Gastrocnemius medialis (tissue), 4 donors: ENCODE measurements at regions of chr1 and their contacts with region 1.

Region 1: DNA sequence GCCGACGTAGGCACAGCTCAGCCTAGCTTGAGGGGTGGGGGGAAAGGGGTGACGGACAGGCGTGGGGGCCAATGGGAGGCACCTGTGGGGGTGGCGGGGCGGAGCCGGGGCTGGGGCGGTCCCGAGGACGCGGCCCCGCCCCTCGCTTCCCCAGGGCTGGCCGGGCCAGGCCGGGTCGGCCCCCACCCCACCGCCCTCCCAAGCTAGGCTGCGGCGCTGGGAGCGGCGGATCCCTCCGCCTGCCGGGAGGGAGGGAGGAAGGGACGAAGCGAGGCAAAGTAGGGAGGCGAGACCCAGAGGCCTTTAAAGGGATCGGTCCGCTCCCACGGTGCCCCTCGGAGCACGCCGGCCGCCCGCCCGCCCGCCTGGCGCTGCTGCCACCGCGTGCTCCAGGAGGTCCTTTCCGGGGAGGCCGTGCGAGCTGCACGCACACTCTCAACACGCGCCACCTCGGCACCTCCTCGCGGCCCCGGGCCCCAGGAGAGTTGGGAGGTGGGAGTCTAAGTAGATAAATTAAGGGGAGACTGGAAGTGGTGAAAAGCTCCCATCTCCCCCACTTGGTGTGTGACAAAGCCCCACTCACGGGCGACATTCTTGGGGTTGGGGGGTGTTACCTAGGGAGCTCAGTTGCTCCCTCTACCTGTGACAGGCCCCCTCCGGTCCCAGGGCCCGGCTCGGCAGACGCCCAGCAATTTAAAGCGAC is 373 bp upstream of the MEF2D start:
- DNase-seq: peak; percentile 94 to 96
- ATAC-seq: peak; percentile 35 to 37
- H3K4me3 ChIP-seq: peak overlapping the region; percentile 89 to 96 (median 93)
- H3K27ac ChIP-seq: peak overlapping the region; percentile 96 to 99 (median 98)
- H3K4me1 ChIP-seq: peaks cover 66 to 67% of the 10 kb centered on the region in 2 donors
- H3K27me3 ChIP-seq: no peaks in the 10 kb centered on the region
- CTCF ChIP-seq: peak in 4 of 5 experiments; percentile 54 to 67 (median 58)
- POLR2A ChIP-seq: no peak

Region 2: GRCh38 chr1:156123356-156124196 is 377.4 kb before region 1 on chr1:
- in situ Hi-C with region 1: loop called in 1 of 4 experiments (anchors 25 kb)
- intact Hi-C with region 1: loop called (anchors 5 kb)
- DNase-seq: peak; percentile 91 to 98
- ATAC-seq: peak; percentile 64 to 73
- H3K4me3 ChIP-seq: peak overlapping the region; percentile 47 to 59 (median 48)
- H3K27ac ChIP-seq: peak overlapping the region; percentile 98 to 99 (median 98)
- H3K4me1 ChIP-seq: peaks cover 98 to 99% of the 10 kb centered on the region in 2 donors
- H3K27me3 ChIP-seq: no peaks in the 10 kb centered on the region
- CTCF ChIP-seq: peak in 3 of 5 experiments; percentile 32 to 48 (median 47)
- POLR2A ChIP-seq: peak; percentile 86 to 88

Region 3: DNA sequence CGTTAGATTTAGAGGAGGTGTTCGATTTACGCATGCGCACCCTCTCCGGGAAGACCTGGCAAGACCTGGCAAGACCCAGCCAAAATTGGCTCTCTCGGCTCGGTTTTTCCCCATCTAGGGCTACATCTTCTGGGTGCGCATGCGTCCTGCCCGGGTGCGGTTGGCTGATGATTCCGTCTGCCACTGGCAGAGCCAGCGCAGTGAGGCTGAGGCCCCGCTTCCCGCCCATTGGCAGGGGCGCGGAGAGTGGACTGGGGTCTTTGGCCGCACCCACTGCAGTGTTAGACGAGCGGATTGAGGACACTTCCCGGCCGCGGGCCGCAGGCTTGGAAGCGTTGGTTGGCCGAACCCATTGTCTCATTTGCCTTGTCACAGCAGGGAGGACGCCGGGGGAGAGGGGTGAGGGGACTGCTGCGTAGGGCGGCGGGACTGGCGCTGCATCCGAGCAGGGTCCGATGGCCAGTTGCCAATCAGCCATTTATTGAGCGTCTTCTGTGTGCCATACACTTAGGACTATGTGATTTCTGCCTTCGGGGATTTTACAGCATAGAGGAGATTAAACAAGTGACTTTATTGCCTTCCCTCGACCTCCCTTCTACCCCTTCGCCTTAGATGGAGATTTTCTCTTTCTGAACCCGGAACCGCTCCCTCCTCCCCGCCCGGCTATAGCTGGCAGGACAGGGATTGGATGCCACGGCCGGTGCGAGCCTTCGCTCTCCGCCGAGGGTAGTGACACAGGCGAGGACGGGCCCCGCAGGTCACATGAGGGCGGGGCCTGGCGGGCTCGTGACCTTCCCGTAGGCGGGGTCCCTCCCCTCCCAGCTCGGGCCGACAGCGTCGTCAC is 44.1 kb before region 1 on chr1:
- in situ Hi-C with region 1: no loop called
- intact Hi-C with region 1: loop called (anchors 1 kb)
- DNase-seq: peak; percentile 99
- ATAC-seq: peak; percentile 84 to 85
- H3K4me3 ChIP-seq: peak overlapping the region; percentile 60 to 76 (median 73)
- H3K27ac ChIP-seq: peak overlapping the region; percentile 96 to 99 (median 98)
- H3K4me1 ChIP-seq: peaks cover 4 to 8% of the 10 kb centered on the region in 2 donors
- H3K27me3 ChIP-seq: no peaks in the 10 kb centered on the region
- CTCF ChIP-seq: peak in 1 of 5 experiments; percentile 16
- POLR2A ChIP-seq: peak; percentile 86 to 95

Region 4: DNA sequence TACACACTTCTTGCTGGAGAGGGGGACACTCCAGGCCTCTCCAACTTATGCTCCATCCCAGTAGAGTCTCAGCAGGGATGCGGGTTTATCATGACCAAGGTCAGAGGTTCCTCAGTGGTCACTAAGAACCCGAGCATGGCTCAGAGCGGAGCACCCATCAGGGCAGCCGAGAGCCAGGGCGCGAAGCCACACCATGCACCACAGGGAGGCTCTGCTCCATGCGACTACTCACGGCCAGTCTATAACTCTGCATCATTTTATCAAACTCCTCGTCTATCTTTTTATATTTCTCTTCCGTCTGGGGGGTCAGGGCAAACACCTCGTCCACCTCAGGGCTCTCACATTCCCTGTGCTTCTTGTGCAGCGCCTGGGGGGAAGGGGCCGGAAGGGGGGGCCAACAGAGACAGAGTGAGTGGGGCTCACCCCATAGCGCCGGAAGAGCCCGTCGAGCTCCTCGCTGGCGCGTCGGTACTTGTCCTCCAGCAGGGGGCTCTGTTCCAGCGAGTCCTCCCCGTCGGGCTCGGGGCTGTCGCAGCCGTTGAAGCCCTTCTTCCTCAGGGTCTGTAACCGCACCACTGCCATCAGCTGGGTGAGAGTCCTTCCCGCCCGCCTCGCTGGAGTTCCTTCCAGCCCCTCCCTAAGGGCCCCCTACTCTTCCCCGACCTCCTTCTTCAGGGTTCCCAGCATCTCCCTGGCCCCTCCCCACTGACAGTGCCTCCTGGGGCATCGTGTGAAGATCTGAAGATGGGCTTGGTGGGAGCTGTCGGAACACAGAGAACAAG is 20.3 kb before region 1 on chr1:
- in situ Hi-C with region 1: no loop called
- intact Hi-C with region 1: loop called (anchors 1 kb)
- DNase-seq: peak in 1 of 2 donors; percentile 61
- ATAC-seq: no peak
- H3K4me3 ChIP-seq: no peak overlapping the region
- H3K27ac ChIP-seq: peak overlapping the region; percentile 96 to 99 (median 98)
- H3K4me1 ChIP-seq: peaks cover 95 to 100% of the 10 kb centered on the region in 2 donors
- H3K27me3 ChIP-seq: no peaks in the 10 kb centered on the region
- CTCF ChIP-seq: peak; percentile 56 to 79 (median 72)
- POLR2A ChIP-seq: no peak

Region 5: GRCh38 chr1:156746728-156747631 is 246.0 kb after region 1 on chr1:
- in situ Hi-C with region 1: no loop called
- intact Hi-C with region 1: loop called (anchors 5 kb)
- DNase-seq: peak; percentile 88 to 95
- ATAC-seq: peak; percentile 51 to 55
- H3K4me3 ChIP-seq: peak overlapping the region; percentile 86 to 100 (median 96)
- H3K27ac ChIP-seq: peak overlapping the region; percentile 94 to 100 (median 100)
- H3K4me1 ChIP-seq: peaks cover 41 to 48% of the 10 kb centered on the region in 2 donors
- H3K27me3 ChIP-seq: no peaks in the 10 kb centered on the region
- CTCF ChIP-seq: peak in 2 of 5 experiments; percentile 34 to 42
- POLR2A ChIP-seq: peak; percentile 55 to 81